ENCODE measurements at regions of chr11 and their contacts with region 1.

Region 1: DNA sequence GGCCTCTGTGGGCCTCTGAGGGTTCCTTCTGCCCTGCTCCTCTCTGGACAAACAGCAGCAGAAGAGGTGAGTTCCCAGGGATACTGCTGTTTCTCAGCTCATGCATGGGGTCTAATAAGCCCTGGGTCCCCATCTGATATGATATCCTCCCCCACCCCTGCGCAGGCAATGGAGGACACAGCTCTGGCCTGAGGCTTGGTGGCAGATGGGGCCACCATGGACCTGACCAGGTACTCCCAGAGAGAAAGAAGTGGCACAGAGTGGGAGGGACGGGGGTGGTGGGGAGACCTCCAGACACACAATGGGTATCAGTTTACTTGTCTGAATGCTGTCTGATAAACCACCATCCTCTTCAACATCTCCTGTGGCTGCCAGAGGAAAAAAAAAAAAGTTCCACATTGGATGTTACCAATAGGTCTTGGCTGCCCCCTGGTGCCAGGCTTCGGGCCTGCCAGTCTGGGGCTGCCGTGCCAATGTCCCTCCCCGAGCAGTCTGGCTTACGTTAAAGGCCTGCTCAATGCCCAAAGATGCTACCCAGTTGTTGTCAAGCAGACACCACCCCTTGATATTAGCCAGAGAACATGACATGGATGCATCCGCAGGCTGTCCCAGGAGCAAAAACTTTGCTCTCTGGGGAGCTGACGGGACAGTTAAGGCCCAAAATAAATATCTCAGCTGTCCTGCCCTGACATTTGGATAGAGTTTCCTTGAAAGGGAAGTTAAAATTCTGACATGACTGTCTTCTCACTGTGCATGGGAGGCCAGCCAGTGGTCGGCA is 27.9 kb upstream of the ABCC8 start:
- DNase-seq: peak in 1 of 2 experiments; percentile 93
- H3K4me3 ChIP-seq: no peak overlapping the region
- H3K27ac ChIP-seq: no peak overlapping the region
- H3K4me1 ChIP-seq: no peaks in the 10 kb centered on the region; a peak in 1 of 7 replicates
- H3K27me3 ChIP-seq: peaks cover 0 to 2% (median 0%) of the 10 kb centered on the region in 4 experiments; a peak in 1 of 7 replicates
- CTCF ChIP-seq: peak; percentile 87 to 96 (median 91)
- EP300 ChIP-seq: no peak
- POLR2A ChIP-seq: no peak
- RAD21 ChIP-seq: peak; percentile 95 to 98

Region 2: GRCh38 chr11:17217401-17217800 is 287.1 kb before region 1 on chr11:
- CTCF ChIA-PET with region 1: no interaction called
- POLR2A ChIA-PET with region 1: no interaction called
- DNase-seq: no peak
- H3K4me3 ChIP-seq: no peak overlapping the region
- H3K27ac ChIP-seq: no peak overlapping the region
- H3K4me1 ChIP-seq: no peaks in the 10 kb centered on the region
- H3K27me3 ChIP-seq: no peaks in the 10 kb centered on the region
- CTCF ChIP-seq: no peak
- EP300 ChIP-seq: no peak
- POLR2A ChIP-seq: no peak
- RAD21 ChIP-seq: no peak

Region 3: GRCh38 chr11:17418444-17419081 is 86.0 kb before region 1 on chr11:
- CTCF ChIA-PET with region 1: interaction called, 1,414 read pairs
- POLR2A ChIA-PET with region 1: no interaction called
- DNase-seq: no peak
- H3K4me3 ChIP-seq: no peak overlapping the region
- H3K27ac ChIP-seq: no peak overlapping the region
- H3K4me1 ChIP-seq: peaks cover 0 to 5% (median 2%) of the 10 kb centered on the region in 4 experiments; a peak in 2 of 7 replicates
- H3K27me3 ChIP-seq: no peaks in the 10 kb centered on the region; a peak in 2 of 7 replicates
- CTCF ChIP-seq: no peak
- EP300 ChIP-seq: no peak
- POLR2A ChIP-seq: no peak
- RAD21 ChIP-seq: no peak

Region 4: DNA sequence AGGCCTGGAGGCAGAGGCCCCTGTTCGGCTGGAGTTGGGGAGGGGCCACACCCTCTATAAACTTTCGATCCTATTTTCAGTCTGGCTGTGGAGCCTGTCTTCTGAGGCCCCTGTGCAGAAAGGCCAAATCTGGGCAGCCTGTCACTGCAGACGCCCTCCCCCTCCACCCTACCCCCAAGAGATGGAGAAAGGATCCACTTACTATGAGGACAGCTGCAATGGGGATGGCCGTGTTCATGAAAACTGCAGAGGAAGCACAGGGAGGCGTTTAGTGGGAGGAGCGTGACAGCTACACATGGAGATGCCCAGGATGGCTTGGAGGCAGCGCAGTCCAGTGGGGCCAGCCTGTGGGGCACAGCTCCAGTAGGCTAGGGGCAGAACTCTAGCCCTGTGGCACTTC is 72.5 kb before region 1 on chr11:
- CTCF ChIA-PET with region 1: interaction called, 14 read pairs
- POLR2A ChIA-PET with region 1: no interaction called
- DNase-seq: no peak
- H3K4me3 ChIP-seq: no peak overlapping the region
- H3K27ac ChIP-seq: no peak overlapping the region
- H3K4me1 ChIP-seq: no peaks in the 10 kb centered on the region; a peak in 1 of 7 replicates
- H3K27me3 ChIP-seq: no peaks in the 10 kb centered on the region
- CTCF ChIP-seq: no peak
- EP300 ChIP-seq: no peak
- POLR2A ChIP-seq: no peak
- RAD21 ChIP-seq: no peak

Region 5: DNA sequence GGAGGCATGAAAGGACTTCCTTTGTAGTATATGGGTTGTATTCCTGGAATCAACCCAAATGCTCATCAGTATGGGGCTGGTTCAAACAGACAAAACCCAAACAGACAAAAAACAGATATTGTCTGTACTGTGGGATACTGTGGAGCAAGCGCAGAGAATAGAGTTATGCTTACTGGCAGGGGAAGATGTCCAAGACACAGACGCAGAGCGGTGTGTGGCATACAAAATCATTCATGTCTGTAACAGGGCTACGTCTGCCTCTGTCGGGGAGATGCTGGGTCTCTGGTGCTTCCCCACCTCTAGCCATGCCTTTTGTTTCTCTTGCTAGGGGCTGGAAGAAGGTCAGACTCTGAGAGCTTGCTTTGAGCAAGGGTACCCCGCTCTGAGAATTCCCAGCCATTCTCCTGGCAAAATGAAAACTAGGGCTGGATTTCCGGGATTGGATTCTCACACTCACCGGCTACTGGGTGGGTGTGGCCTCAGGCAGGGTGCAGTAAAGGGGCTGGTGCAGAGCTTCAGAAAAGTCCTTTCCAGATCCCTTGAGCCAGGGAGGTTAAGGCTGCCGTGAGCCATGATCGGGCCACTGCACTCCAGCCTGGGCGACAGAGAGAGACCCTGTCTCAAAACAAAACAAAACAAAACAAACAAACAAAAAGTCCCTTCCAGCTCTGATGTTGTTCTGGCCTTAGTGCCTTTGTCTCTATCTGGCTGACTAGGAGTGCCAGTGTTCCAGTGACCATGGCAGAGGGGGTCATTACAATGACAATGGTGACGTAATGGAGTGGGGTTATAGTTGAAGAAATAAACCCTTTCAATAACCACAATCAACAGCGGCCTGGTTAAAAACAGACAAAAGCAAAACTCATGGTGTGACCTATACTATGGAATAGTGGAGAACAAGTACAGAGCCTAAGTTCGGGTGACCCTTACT is 25.0 kb before region 1 on chr11:
- CTCF ChIA-PET with region 1: interaction called, 26 read pairs
- POLR2A ChIA-PET with region 1: interaction called, 4 read pairs
- DNase-seq: peak; percentile 25 to 93
- H3K4me3 ChIP-seq: no peak overlapping the region
- H3K27ac ChIP-seq: no peak overlapping the region
- H3K4me1 ChIP-seq: peaks cover 4 to 8% (median 6%) of the 10 kb centered on the region in 4 experiments; a peak in 6 of 7 replicates
- H3K27me3 ChIP-seq: peaks cover 26 to 47% (median 41%) of the 10 kb centered on the region in 4 experiments
- CTCF ChIP-seq: no peak
- EP300 ChIP-seq: no peak
- POLR2A ChIP-seq: no peak
- RAD21 ChIP-seq: peak in 1 of 2 experiments; percentile 23; a peak in 1 of 4 replicates

Region 6: DNA sequence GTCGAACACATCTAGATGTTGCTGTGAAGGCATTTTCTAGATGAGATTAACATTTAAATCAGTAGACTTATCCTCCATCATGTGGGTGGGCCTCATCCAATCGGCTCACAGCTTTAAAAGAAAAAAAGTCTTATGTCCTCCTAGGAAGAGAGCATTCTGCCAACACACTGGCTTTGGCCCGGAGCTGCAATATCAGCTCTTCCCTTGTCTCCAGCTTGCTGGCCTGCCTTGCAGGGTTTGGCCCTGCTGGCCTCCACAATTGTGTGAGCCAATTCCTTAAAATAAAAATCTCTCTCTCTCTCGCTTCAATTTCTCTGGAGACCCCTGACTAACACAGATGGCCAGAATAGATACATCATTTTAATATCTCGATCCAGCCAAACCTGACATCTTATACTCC is 14.8 kb before region 1 on chr11:
- CTCF ChIA-PET with region 1: interaction called, 57 read pairs
- POLR2A ChIA-PET with region 1: interaction called, 3 read pairs
- DNase-seq: no peak
- H3K4me3 ChIP-seq: no peak overlapping the region
- H3K27ac ChIP-seq: no peak overlapping the region
- H3K4me1 ChIP-seq: no peaks in the 10 kb centered on the region; a peak in 1 of 7 replicates
- H3K27me3 ChIP-seq: 0 out of 7 replicates have a peak, but pooled peaks cover 0 to 2% (median 0%) of the 10 kb centered on the region in 4 experiments
- CTCF ChIP-seq: no peak
- EP300 ChIP-seq: no peak
- POLR2A ChIP-seq: no peak
- RAD21 ChIP-seq: no peak

Region 7: DNA sequence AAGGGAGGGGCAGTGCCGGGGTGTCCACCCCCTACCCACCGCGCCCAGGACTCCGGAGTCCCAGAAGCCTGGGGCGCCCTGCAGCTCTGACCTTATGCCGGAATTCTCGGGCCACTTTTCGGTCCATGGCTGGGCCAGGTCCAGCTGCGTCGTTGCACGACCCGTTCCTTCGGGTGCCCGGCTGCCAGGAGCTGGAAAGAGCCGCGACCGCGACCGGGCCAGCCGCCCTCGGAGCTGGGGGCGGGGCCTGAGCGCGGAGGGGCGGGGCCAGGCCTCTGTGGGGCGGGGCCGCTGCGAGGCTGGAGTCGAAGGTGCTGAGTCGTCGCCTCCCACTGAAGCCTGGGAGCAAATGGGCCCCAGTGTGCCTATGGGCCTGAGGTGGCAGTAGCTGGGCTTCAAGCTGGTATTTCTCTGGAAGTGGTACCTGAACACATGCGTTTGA is 39.7 kb after region 1 on chr11 and contains the start of gene USH1C:
- CTCF ChIA-PET with region 1: interaction called, 11 read pairs
- POLR2A ChIA-PET with region 1: no interaction called
- DNase-seq: peak in 1 of 2 experiments; percentile 95
- H3K4me3 ChIP-seq: peak within 1 kb of the TSS; percentile 50 to 77 (median 62)
- H3K27ac ChIP-seq: no peak within 1 kb of the TSS
- H3K4me1 ChIP-seq: peaks cover 6 to 20% (median 9%) of the 10 kb centered on the region in 4 experiments
- H3K27me3 ChIP-seq: peaks cover 0 to 24% (median 8%) of the 10 kb centered on the region in 4 experiments; a peak in 4 of 7 replicates
- CTCF ChIP-seq: no peak
- EP300 ChIP-seq: no peak
- POLR2A ChIP-seq: no peak; a peak in 1 of 3 replicates
- RAD21 ChIP-seq: no peak
- total RNA-seq, gene USH1C: 1.3 and 2.4 TPM in 2 replicates

Region 8: GRCh38 chr11:17610085-17610894 is 105.8 kb after region 1 on chr11:
- CTCF ChIA-PET with region 1: no interaction called
- POLR2A ChIA-PET with region 1: no interaction called
- DNase-seq: no peak
- H3K4me3 ChIP-seq: no peak overlapping the region
- H3K27ac ChIP-seq: no peak overlapping the region
- H3K4me1 ChIP-seq: no peaks in the 10 kb centered on the region
- H3K27me3 ChIP-seq: peaks cover 0 to 2% (median 0%) of the 10 kb centered on the region in 4 experiments; a peak in 2 of 7 replicates
- CTCF ChIP-seq: no peak
- EP300 ChIP-seq: no peak
- POLR2A ChIP-seq: no peak
- RAD21 ChIP-seq: no peak

Region 9: DNA sequence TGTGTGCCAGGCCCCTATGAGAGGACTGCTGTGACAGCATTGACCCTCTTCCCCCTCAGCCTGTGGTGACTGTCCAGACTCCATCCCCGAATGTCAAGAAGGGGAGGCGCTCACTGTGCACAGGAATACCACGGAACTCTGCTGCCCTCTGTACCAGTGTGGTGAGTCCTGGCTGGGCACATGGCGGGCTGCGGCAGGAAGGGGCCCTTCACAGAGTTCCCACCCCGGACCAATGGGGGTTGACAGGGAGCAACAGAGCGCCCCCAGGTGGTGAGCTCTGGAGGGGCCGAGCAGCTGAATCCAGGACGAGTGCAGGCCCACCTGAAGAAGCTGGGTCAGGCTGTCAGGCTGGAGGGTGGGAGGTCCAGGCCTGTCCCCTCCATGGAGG is 131.0 kb after region 1 on chr11:
- CTCF ChIA-PET with region 1: no interaction called
- POLR2A ChIA-PET with region 1: no interaction called
- DNase-seq: no peak
- H3K4me3 ChIP-seq: no peak overlapping the region
- H3K27ac ChIP-seq: no peak overlapping the region
- H3K4me1 ChIP-seq: no peaks in the 10 kb centered on the region
- H3K27me3 ChIP-seq: no peaks in the 10 kb centered on the region
- CTCF ChIP-seq: peak; percentile 47 to 56 (median 53)
- EP300 ChIP-seq: no peak
- POLR2A ChIP-seq: no peak
- RAD21 ChIP-seq: peak; percentile 24 to 36; a peak in 2 of 4 replicates